H1 (cell line): ENCODE measurements at regions of chr5 and their contacts with region 1.

Region 1: GRCh38 chr5:96336351-96336985 is 96.6 kb downstream of the PCSK1 start:
- DNase-seq: peak; percentile 36 to 62
- H3K4me3 ChIP-seq: peak overlapping the region in 1 of 4 experiments; percentile 19; a peak in 1 of 8 replicates
- H3K27ac ChIP-seq: no peak overlapping the region
- H3K4me1 ChIP-seq: no peaks in the 10 kb centered on the region; a peak in 1 of 7 replicates
- H3K27me3 ChIP-seq: no peaks in the 10 kb centered on the region
- CTCF ChIP-seq: peak in 2 of 3 experiments; percentile 78 to 84; a peak in 3 of 4 replicates
- EP300 ChIP-seq: no peak
- POLR2A ChIP-seq: no peak
- RAD21 ChIP-seq: peak; percentile 96 to 98

Region 2: DNA sequence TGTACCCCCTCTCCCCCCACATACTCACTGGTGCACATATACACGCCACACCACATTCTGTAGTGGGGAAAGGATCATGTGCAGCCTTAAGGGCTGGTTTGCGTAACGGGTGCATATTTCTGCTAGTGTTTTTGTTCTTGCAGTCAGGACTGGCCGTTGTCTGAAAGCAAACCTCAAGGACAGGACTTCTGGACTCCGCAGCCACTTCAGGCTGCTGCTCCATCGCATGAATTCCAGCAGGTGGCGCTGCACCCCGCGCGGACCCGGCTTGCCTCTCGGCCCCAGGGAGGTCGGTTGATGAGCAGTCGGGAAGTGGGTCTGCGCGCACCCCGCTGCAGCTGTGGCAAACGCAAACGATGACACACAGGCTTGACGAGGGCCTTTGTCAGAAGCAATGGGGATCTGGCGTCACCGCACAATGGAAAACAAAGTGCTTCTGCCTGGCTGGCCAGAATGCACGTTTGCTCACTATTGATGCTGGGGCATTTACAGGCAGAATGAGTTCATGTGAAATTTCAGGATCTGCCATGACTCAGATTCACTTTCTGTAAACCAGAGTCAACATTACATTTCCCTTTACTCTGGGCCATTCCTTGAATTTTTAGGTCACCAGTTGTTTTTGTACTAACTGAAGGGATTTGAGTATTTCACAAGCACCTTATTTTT is 477.7 kb before region 1 on chr5:
- CTCF ChIA-PET with region 1: interaction called, 43 read pairs
- POLR2A ChIA-PET with region 1: no interaction called
- DNase-seq: peak; percentile 82 to 96
- H3K4me3 ChIP-seq: peak overlapping the region in 2 of 4 experiments; percentile 7 to 32; a peak in 1 of 8 replicates
- H3K27ac ChIP-seq: no peak overlapping the region
- H3K4me1 ChIP-seq: no peaks in the 10 kb centered on the region; a peak in 2 of 7 replicates
- H3K27me3 ChIP-seq: no peaks in the 10 kb centered on the region; a peak in 1 of 7 replicates
- CTCF ChIP-seq: peak; percentile 89 to 97 (median 94)
- EP300 ChIP-seq: peak in 1 of 2 experiments; percentile 39; a peak in 1 of 3 replicates
- POLR2A ChIP-seq: no peak
- RAD21 ChIP-seq: peak; percentile 99

Region 3: DNA sequence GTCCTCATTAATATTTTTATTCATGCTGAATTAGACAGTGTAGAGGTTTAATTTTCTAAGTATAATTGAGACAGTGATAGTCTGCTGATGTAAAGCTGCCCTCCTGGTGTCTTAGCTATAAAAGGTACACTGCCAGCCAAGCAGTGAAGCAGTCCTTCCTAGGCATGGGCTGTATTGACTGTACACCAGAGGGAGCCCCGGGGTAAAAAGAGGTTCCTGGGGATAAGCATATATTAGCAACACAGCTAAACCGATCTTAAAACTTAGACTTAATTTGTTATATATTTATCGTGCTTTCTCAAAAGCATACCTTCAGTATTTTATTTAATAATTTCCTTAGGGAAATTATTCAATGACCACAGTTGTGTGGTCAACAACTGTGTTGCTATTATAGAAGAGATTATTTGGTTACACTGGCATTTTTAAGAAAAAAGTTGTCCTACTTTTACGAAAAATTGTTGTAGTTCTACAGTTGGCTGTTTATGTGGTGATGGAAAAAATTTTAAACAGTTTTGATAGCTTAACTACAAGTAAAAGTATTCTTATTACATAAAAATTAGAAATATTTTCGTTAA is 443.6 kb before region 1 on chr5:
- CTCF ChIA-PET with region 1: interaction called, 43 read pairs
- POLR2A ChIA-PET with region 1: no interaction called
- DNase-seq: no peak
- H3K4me3 ChIP-seq: no peak overlapping the region
- H3K27ac ChIP-seq: no peak overlapping the region
- H3K4me1 ChIP-seq: peaks cover 0 to 14% (median 7%) of the 10 kb centered on the region in 4 experiments; a peak in 4 of 7 replicates
- H3K27me3 ChIP-seq: no peaks in the 10 kb centered on the region
- CTCF ChIP-seq: peak; percentile 47 to 64 (median 63)
- EP300 ChIP-seq: no peak
- POLR2A ChIP-seq: no peak
- RAD21 ChIP-seq: peak; percentile 82 to 85

Region 4: DNA sequence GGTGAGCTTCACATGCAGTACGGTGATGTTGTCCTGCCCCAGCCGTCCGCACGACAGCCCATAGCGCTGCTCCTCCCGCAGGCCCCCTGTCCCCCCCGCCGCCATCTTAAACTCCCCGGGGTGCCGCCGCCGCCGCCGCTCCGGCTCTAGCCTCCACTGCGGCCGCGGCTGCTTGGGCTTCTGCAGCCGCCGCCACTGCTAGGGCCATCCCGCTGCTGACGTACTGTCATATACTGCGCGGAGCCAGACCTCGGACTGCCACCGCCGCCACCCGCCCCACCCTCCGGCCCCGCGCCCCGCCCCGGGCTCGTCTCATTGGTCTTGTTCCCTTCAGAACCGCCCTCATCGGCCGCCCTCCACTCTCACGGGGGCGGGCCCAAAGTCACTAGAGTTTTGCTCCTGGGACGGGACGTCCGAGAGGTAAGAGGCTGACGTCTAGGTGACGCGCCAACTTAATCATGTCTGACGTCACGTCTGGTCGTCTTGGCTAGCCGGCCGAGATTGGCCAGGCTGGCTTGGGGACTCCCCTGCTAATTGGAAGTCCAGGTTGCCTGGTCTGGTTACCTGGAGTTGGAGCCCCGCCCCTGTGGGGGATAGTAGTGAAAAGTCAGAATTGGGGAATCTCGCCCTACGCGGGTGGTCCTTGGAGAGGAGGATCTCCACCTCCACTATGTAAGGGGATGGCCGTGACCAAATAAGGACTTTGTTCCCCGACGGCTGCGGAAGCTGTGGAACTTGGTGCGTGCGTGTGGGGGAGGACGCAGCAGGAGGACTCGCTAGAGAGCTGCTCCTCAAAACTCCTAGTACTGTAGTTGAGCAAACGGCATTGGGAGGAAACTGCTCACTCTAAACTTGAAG is 374.6 kb before region 1 on chr5 and contains the start of gene ELL2:
- CTCF ChIA-PET with region 1: interaction called, 38 read pairs
- POLR2A ChIA-PET with region 1: no interaction called
- DNase-seq: peak; percentile 93 to 97
- H3K4me3 ChIP-seq: peak within 1 kb of the TSS; percentile 62 to 91 (median 82)
- H3K27ac ChIP-seq: peak within 1 kb of the TSS; percentile 87; the same call in 1 of the 2 replicates
- H3K4me1 ChIP-seq: peaks cover 13 to 27% (median 18%) of the 10 kb centered on the region in 4 experiments; a peak in 6 of 7 replicates
- H3K27me3 ChIP-seq: peaks cover 0 to 12% (median 9%) of the 10 kb centered on the region in 4 experiments; a peak in 5 of 7 replicates
- CTCF ChIP-seq: no peak
- EP300 ChIP-seq: no peak
- POLR2A ChIP-seq: peak; percentile 47 to 52; a peak in 2 of 3 replicates
- RAD21 ChIP-seq: no peak
- total RNA-seq, gene ELL2: 21.7 and 29.4 TPM in 2 replicates

Region 5: GRCh38 chr5:96133341-96134079 is 203.0 kb before region 1 on chr5:
- CTCF ChIA-PET with region 1: no interaction called
- POLR2A ChIA-PET with region 1: no interaction called
- DNase-seq: no peak
- H3K4me3 ChIP-seq: no peak overlapping the region
- H3K27ac ChIP-seq: no peak overlapping the region
- H3K4me1 ChIP-seq: no peaks in the 10 kb centered on the region
- H3K27me3 ChIP-seq: no peaks in the 10 kb centered on the region
- CTCF ChIP-seq: no peak
- EP300 ChIP-seq: no peak
- POLR2A ChIP-seq: no peak
- RAD21 ChIP-seq: no peak

Region 6: DNA sequence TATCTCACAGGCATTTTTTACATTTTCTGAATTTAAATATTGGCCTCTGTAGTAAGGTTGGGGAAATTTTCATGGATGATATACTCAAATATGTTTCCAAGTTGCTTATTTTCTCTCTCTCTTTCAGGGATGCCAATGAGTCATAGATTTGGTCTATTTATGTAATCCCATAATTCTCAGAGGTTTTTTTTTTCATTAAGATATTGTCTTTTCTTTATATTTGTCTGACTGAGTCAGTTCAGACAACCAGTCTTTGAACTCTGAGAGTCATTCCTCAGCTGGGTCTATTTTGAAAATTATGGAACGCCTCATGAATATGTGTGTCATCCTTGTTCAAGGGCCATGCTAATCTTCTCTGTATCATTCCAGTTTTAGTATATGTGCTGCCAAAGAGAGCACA is 126.6 kb before region 1 on chr5:
- CTCF ChIA-PET with region 1: no interaction called
- POLR2A ChIA-PET with region 1: no interaction called
- DNase-seq: no peak
- H3K4me3 ChIP-seq: no peak overlapping the region
- H3K27ac ChIP-seq: no peak overlapping the region
- H3K4me1 ChIP-seq: no peaks in the 10 kb centered on the region
- H3K27me3 ChIP-seq: peaks cover 0 to 1% (median 0%) of the 10 kb centered on the region in 4 experiments; a peak in 1 of 7 replicates
- CTCF ChIP-seq: no peak
- EP300 ChIP-seq: no peak
- POLR2A ChIP-seq: no peak
- RAD21 ChIP-seq: no peak

Region 7: DNA sequence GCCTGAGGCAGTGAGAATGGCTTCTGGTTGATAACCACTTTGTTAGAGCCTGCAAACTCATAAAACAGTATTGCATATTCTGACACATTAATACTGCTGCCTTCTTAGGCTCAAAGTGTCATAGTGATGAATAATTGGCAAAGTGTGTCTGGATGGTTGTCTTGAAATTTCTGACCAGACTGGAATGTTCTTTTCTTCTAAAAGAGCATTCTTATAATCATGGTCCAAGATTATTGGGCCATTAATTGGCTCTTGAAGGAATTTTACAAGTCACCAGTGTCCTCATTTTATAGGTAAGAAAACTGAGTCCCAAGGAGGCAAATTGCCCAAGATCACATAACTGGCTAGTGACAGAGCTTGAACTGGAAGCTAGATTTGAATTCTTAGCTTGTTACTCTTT is 15.1 kb before region 1 on chr5:
- CTCF ChIA-PET with region 1: interaction called, 12 read pairs
- POLR2A ChIA-PET with region 1: no interaction called
- DNase-seq: no peak
- H3K4me3 ChIP-seq: no peak overlapping the region
- H3K27ac ChIP-seq: no peak overlapping the region
- H3K4me1 ChIP-seq: no peaks in the 10 kb centered on the region
- H3K27me3 ChIP-seq: no peaks in the 10 kb centered on the region
- CTCF ChIP-seq: no peak
- EP300 ChIP-seq: no peak
- POLR2A ChIP-seq: no peak
- RAD21 ChIP-seq: no peak

Region 8: DNA sequence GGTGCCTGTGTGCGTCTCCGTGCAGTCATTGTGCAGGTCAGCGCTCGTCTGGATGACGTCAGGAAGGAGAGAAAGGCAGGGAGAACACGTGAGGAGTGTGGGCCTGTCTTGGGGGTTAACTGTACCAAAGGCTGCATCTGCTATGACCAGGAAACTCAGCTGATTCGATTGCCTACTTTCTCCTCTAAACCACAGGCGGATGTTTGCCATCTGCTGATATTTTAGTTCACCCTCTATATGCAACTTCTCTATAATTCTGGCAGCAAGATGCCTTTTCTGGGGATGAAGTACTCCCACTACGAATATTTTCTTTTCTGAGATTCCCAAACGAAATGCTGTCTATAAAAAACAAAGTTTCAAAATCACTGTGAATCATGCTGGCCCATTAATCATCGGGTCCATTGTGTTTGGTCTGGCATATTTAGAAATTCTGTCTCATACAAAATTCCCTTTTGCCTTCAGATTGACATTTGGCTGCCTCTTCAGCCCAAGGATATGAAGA is 71.9 kb after region 1 on chr5:
- CTCF ChIA-PET with region 1: no interaction called
- POLR2A ChIA-PET with region 1: no interaction called
- DNase-seq: no peak
- H3K4me3 ChIP-seq: no peak overlapping the region
- H3K27ac ChIP-seq: no peak overlapping the region
- H3K4me1 ChIP-seq: no peaks in the 10 kb centered on the region
- H3K27me3 ChIP-seq: no peaks in the 10 kb centered on the region
- CTCF ChIP-seq: no peak
- EP300 ChIP-seq: no peak
- POLR2A ChIP-seq: no peak
- RAD21 ChIP-seq: no peak

Region 9: GRCh38 chr5:96595300-96596090 is 259.0 kb after region 1 on chr5:
- CTCF ChIA-PET with region 1: interaction called, 14 read pairs
- POLR2A ChIA-PET with region 1: no interaction called
- DNase-seq: peak in 1 of 2 experiments; percentile 55
- H3K4me3 ChIP-seq: no peak overlapping the region
- H3K27ac ChIP-seq: no peak overlapping the region
- H3K4me1 ChIP-seq: no peaks in the 10 kb centered on the region
- H3K27me3 ChIP-seq: no peaks in the 10 kb centered on the region
- CTCF ChIP-seq: peak in 2 of 3 experiments; percentile 43 to 51; a peak in 2 of 4 replicates
- EP300 ChIP-seq: no peak
- POLR2A ChIP-seq: no peak
- RAD21 ChIP-seq: peak; percentile 40 to 54